Endothelial cell of umbilical vein (primary cell): ENCODE measurements at regions of chr9 and their contacts with region 1.

Region 1: GRCh38 chr9:4489919-4490704 is at the start of gene SLC1A1:
- DNase-seq: peak; percentile 69
- H3K4me3 ChIP-seq: peak within 1 kb of the TSS; percentile 84 to 94 (median 90)
- H3K27ac ChIP-seq: peak within 1 kb of the TSS; percentile 16
- H3K4me1 ChIP-seq: peaks cover 35% of the 10 kb centered on the region
- H3K27me3 ChIP-seq: no peaks in the 10 kb centered on the region
- CTCF ChIP-seq: no peak
- POLR2A ChIP-seq: no peak
- total RNA-seq, gene SLC1A1: 6.5 and 8.3 TPM in 2 replicates

Region 2: GRCh38 chr9:4430454-4431261 is 59.5 kb before region 1 on chr9:
- CTCF ChIA-PET with region 1: interaction called, 3 read pairs
- POLR2A ChIA-PET with region 1: no interaction called
- dilution Hi-C with region 1: no loop called
- intact Hi-C with region 1: loop called (anchors 1 kb)
- DNase-seq: peak; percentile 88
- H3K4me3 ChIP-seq: no peak overlapping the region
- H3K27ac ChIP-seq: peak overlapping the region; percentile 42
- H3K4me1 ChIP-seq: peaks cover 21% of the 10 kb centered on the region
- H3K27me3 ChIP-seq: no peaks in the 10 kb centered on the region
- CTCF ChIP-seq: no peak
- POLR2A ChIP-seq: peak; percentile 17

Region 3: DNA sequence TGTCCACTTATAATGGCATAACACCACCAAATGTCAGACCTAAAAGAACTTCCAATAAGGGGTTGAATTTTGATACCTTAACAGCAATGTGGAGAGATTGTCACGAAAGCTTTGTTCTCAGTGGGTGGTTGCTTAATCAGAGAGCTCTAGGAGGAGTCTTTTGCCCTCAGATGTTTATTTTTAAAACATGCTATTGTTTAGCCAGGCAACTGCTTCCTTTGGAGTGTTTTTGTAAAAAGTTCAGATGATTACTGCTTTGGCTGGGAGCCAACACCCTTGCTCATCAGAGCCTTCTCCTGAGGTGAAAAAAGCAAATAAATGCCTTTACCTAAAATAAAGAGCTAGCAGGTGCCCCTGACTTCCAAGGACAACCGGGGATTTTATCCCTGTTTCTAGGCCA is 65.1 kb after region 1 on chr9:
- CTCF ChIA-PET with region 1: interaction called, 3 read pairs
- POLR2A ChIA-PET with region 1: no interaction called
- dilution Hi-C with region 1: no loop called
- intact Hi-C with region 1: loop called (anchors 1 kb)
- DNase-seq: peak; percentile 91
- H3K4me3 ChIP-seq: no peak overlapping the region
- H3K27ac ChIP-seq: peak overlapping the region; percentile 86
- H3K4me1 ChIP-seq: peaks cover 23% of the 10 kb centered on the region
- H3K27me3 ChIP-seq: no peaks in the 10 kb centered on the region
- CTCF ChIP-seq: no peak
- POLR2A ChIP-seq: no peak

Region 4: GRCh38 chr9:4640027-4640426 is 149.9 kb after region 1 on chr9:
- CTCF ChIA-PET with region 1: interaction called, 8 read pairs
- POLR2A ChIA-PET with region 1: no interaction called
- dilution Hi-C with region 1: no loop called
- intact Hi-C with region 1: loop called (anchors 5 kb)
- DNase-seq: peak; percentile 64
- H3K4me3 ChIP-seq: no peak overlapping the region
- H3K27ac ChIP-seq: no peak overlapping the region
- H3K4me1 ChIP-seq: no peaks in the 10 kb centered on the region
- H3K27me3 ChIP-seq: no peaks in the 10 kb centered on the region
- CTCF ChIP-seq: peak; percentile 37 to 51
- POLR2A ChIP-seq: no peak

Region 5: GRCh38 chr9:4740638-4741364 is 250.7 kb after region 1 on chr9 and contains the start of gene AK3:
- CTCF ChIA-PET with region 1: no interaction called
- POLR2A ChIA-PET with region 1: no interaction called
- dilution Hi-C with region 1: no loop called
- intact Hi-C with region 1: loop called (anchors 5 kb)
- DNase-seq: peak; percentile 85
- H3K4me3 ChIP-seq: peak within 1 kb of the TSS; percentile 69 to 94 (median 90)
- H3K27ac ChIP-seq: peak within 1 kb of the TSS; percentile 77
- H3K4me1 ChIP-seq: peaks cover 10% of the 10 kb centered on the region
- H3K27me3 ChIP-seq: no peaks in the 10 kb centered on the region
- CTCF ChIP-seq: peak; percentile 7 to 23
- POLR2A ChIP-seq: peak; percentile 88
- total RNA-seq, gene AK3: 38.1 and 42.3 TPM in 2 replicates